Cardiac septum (tissue), 1 donor: ENCODE measurements at regions of chr2 and their contacts with region 1.

Region 1: GRCh38 chr2:210195101-210195852 is 24.1 kb upstream of the KANSL1L start:
- DNase-seq: no peak

Region 2: GRCh38 chr2:209901172-209901571 is 294.1 kb before region 1 on chr2:
- intact Hi-C with region 1: no loop called
- DNase-seq: no peak

Region 3: GRCh38 chr2:209977386-209978239 is 217.7 kb before region 1 on chr2:
- intact Hi-C with region 1: loop called (anchors 1 kb)
- DNase-seq: no peak

Region 4: GRCh38 chr2:210072922-210073509 is 122.3 kb before region 1 on chr2:
- intact Hi-C with region 1: loop called (anchors 2 kb)
- DNase-seq: no peak

Region 5: DNA sequence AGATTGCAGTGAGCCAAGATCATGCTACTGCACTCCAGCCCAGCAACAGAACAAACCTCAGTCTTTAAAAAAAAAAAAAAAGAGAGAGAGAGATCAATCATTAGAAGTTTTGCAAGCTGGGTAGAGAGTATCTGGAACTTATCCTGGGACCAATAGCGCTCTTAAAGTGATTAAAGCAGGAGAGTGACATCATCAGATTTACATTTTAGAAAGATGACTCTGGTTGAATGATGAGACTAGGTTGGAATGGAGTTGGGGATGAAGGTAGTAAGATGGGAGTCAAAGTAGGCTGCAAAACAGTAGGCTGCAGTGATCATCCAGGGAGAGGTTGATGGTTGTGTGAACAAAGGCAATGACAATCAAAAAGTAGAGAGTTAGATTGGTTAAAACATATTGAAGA is 81.9 kb after region 1 on chr2:
- intact Hi-C with region 1: no loop called
- DNase-seq: no peak